ENCODE measurements at regions of chr6 and their contacts with region 1.

Region 1: DNA sequence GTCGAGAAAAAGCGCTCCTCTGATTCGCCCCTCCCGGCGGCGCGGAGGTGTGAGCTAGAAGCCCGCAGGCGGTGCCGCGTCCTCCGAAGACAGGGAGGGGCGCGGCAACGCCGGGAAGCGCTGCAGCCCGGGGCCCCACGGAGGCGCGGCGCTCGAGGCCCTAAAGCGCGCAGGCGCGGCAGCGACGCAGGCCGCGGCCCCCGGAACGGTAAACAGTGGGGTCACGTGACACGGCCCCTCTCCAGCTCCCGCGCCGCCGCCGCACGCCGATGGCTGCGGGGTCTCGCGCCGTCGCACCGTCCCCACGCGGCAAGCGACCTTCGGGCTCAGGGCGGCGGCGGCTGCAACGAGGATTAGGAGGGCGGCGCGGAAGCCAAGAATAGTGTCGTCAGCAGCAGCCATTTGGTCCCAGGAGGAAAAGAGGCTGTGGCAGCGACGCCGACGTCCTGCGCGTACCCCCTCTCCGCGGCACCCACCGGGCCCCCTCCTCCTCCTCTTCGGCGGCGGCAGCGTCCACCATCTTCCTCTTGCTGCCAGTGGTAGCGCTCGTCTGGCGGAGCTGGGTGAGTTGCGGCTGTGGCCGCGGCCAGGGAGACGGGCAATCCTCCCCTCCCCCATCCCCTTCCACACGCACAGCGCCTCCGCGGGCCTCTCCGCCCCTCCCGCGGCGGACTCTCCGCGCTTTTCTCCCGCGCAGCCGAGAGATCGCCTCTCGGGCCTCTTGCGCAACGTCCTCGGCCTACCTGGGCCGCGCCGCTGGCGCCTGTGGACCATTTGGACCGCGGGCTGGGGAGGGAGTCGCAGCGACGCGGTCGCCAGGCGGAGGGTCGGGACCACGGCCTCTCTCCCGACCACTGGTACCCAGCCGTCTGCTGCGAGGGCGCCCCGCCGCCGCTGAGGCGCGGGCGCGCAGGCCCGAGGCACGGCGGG is at the start of gene PHF3:
- DNase-seq: peak; percentile 81 to 98 (median 90)
- ATAC-seq: peak; percentile 91
- H3K4me3 ChIP-seq: peak within 1 kb of the TSS; percentile 85 to 97
- H3K4me3 Mint-ChIP-seq: peak within 1 kb of the TSS; percentile 98
- H3K27ac ChIP-seq: peak within 1 kb of the TSS; percentile 94 to 96
- H3K27ac Mint-ChIP-seq: peak within 1 kb of the TSS; percentile 98
- H3K4me1 ChIP-seq: peaks cover 35% of the 10 kb centered on the region
- H3K4me1 Mint-ChIP-seq: peaks cover 53% of the 10 kb centered on the region
- H3K27me3 ChIP-seq: no peaks in the 10 kb centered on the region
- H3K27me3 Mint-ChIP-seq: no peaks in the 10 kb centered on the region
- CTCF ChIP-seq: no peak
- total RNA-seq, gene PHF3: 123 to 126 TPM

Region 2: DNA sequence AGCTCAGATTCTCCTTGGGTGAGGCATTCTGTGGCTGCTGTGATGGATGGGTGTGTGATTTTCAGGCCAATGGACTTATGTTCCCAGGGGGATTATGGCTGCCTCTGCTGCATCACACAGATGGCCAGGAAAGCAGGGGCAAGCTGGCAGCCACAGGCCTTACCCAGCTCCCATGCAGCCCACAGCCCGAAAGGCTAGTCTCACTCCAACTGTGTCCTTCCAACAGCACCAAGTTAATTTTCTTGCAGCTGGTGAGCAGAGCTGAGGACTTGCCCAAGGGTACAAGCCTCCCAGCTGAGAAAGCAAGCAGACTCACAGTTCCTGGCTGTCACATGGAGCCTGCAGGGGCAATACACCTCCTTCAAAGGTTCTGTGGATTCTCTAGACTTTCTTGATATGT is 1194.7 kb before region 1 on chr6:
- CTCF ChIA-PET with region 1: no interaction called
- POLR2A ChIA-PET with region 1: no interaction called
- intact Hi-C with region 1: no loop called
- DNase-seq: no peak
- ATAC-seq: no peak
- H3K4me3 ChIP-seq: no peak overlapping the region
- H3K4me3 Mint-ChIP-seq: no peak overlapping the region
- H3K27ac ChIP-seq: no peak overlapping the region
- H3K27ac Mint-ChIP-seq: no peak overlapping the region
- H3K4me1 ChIP-seq: no peaks in the 10 kb centered on the region
- H3K4me1 Mint-ChIP-seq: no peaks in the 10 kb centered on the region
- H3K27me3 ChIP-seq: no peaks in the 10 kb centered on the region
- H3K27me3 Mint-ChIP-seq: no peaks in the 10 kb centered on the region
- CTCF ChIP-seq: no peak

Region 3: DNA sequence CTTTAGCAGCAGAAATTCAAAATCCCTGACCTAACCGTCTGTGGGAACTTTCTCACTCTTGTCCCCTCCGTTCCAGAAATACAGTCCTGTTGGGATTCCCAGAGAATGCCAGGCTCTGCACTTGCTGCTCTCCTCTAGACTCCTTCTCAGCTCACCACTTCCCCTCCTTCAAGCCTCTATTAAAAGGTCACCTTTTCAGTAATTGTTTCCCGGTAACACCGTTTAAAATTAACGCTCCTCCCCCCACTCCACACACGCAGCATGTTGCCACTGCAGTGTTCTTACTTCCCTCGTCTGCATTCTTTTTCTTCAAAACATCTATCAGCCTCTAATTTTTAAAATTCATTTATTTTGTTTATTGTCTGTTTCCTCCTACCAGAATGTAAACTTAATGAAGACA is 267.5 kb before region 1 on chr6:
- CTCF ChIA-PET with region 1: no interaction called
- POLR2A ChIA-PET with region 1: no interaction called
- intact Hi-C with region 1: no loop called
- DNase-seq: no peak
- ATAC-seq: no peak
- H3K4me3 ChIP-seq: no peak overlapping the region
- H3K4me3 Mint-ChIP-seq: no peak overlapping the region
- H3K27ac ChIP-seq: no peak overlapping the region
- H3K27ac Mint-ChIP-seq: no peak overlapping the region
- H3K4me1 ChIP-seq: no peaks in the 10 kb centered on the region
- H3K4me1 Mint-ChIP-seq: no peaks in the 10 kb centered on the region
- H3K27me3 ChIP-seq: no peaks in the 10 kb centered on the region
- H3K27me3 Mint-ChIP-seq: no peaks in the 10 kb centered on the region
- CTCF ChIP-seq: no peak

Region 4: DNA sequence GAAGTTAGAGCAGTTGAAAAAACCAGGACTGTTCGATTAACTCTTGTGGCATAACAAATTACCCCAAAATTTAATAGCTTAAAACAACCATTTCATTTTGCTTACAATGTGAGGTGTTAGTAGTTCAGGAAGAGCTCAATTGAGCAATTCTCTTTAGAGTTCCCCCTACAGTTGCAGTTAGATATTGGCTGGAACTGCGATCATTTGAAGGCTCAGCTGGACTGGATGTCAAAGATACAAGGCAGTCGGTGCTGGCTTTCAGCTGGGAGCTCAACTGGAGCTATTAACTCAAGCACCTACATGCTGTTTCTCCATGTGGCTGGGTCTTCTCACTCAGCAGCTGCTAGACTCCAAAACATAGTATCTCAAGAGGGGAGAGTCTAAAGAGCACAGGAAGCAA is 159.6 kb before region 1 on chr6:
- CTCF ChIA-PET with region 1: no interaction called
- POLR2A ChIA-PET with region 1: no interaction called
- intact Hi-C with region 1: no loop called
- DNase-seq: no peak
- ATAC-seq: no peak
- H3K4me3 ChIP-seq: no peak overlapping the region
- H3K4me3 Mint-ChIP-seq: no peak overlapping the region
- H3K27ac ChIP-seq: no peak overlapping the region
- H3K27ac Mint-ChIP-seq: no peak overlapping the region
- H3K4me1 ChIP-seq: no peaks in the 10 kb centered on the region
- H3K4me1 Mint-ChIP-seq: no peaks in the 10 kb centered on the region
- H3K27me3 ChIP-seq: no peaks in the 10 kb centered on the region
- H3K27me3 Mint-ChIP-seq: peaks cover 2% of the 10 kb centered on the region
- CTCF ChIP-seq: no peak

Region 5: DNA sequence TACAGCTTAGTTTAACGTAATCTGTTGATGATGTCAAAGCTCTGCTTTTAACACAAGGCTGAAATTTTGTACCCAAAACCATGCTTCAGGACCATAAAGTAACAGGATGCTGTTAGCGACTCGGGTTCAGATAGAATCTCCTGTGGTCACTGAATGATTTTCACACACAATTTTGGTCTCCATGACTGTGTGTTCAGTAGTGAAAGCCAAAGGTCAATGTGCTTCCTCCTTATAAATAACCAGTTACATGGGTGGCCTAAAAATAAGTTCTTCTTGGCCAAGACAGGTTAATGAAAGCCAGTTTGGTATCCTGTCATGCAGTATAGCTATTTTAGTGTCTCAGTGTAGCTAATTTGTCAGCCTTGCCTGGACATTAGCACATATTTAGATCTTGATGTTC is 82.6 kb before region 1 on chr6:
- CTCF ChIA-PET with region 1: no interaction called
- POLR2A ChIA-PET with region 1: no interaction called
- intact Hi-C with region 1: no loop called
- DNase-seq: no peak
- ATAC-seq: no peak
- H3K4me3 ChIP-seq: no peak overlapping the region
- H3K4me3 Mint-ChIP-seq: no peak overlapping the region
- H3K27ac ChIP-seq: no peak overlapping the region
- H3K27ac Mint-ChIP-seq: no peak overlapping the region
- H3K4me1 ChIP-seq: no peaks in the 10 kb centered on the region
- H3K4me1 Mint-ChIP-seq: no peaks in the 10 kb centered on the region
- H3K27me3 ChIP-seq: peaks cover 0 to 8% of the 10 kb centered on the region in 2 experiments
- H3K27me3 Mint-ChIP-seq: peaks cover 21% of the 10 kb centered on the region
- CTCF ChIP-seq: no peak

Region 6: DNA sequence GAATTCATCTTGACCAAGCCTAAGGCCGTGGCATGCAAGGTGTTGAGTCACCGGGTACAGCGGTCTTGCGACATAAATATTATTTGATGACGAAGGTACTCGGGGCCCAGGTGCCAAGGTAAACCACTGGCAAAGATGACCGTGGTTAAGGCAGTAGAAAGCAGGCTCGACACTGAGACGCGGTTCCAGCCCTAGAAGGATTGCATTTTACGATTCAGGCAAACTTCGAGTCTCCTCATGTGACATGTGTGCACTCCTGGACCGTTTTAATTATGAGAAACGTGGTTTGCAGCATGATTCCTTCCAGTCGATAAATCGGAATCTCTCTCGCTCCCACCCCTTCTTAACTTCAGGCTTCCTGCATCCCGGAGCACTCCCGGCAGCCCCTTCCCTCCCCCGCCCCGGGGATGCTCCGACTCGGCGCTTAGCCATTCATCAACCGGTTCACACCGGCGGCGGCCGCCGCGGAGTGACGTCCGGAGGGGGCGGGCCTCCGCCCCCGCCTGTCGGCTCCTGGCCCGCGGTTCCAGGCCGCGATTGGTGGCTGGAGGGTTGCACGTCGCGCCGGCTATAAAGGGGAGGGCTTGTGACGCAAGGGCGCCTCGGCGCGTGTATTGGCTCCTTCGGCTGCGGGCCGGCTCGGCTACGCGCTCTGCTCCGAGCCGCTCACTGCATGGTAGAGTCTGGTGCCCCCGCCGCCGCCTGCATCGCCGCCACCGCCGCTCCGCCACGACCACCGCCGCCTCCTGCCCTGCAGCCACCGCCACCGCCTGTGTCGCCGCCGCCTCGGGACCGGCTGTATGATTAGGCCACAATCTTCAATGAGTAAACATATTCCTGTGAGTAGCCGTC is 63.7 kb before region 1 on chr6 and contains the starts of genes LOC128125822 and PTP4A1:
- CTCF ChIA-PET with region 1: interaction called, 4 read pairs
- POLR2A ChIA-PET with region 1: interaction called, 37 read pairs
- intact Hi-C with region 1: loop called (anchors 1 kb)
- DNase-seq: peak; percentile 94 to 99 (median 96)
- ATAC-seq: peak; percentile 83
- H3K4me3 ChIP-seq: peak within 1 kb of the TSS; percentile 66 to 85
- H3K4me3 Mint-ChIP-seq: peak within 1 kb of the TSS; percentile 93
- H3K27ac ChIP-seq: peak within 1 kb of the TSS; percentile 97 to 98
- H3K27ac Mint-ChIP-seq: peak within 1 kb of the TSS; percentile 98
- H3K4me1 ChIP-seq: peaks cover 27% of the 10 kb centered on the region
- H3K4me1 Mint-ChIP-seq: peaks cover 41% of the 10 kb centered on the region
- H3K27me3 ChIP-seq: no peaks in the 10 kb centered on the region
- H3K27me3 Mint-ChIP-seq: no peaks in the 10 kb centered on the region
- CTCF ChIP-seq: no peak
- total RNA-seq, gene PTP4A1: 329 to 360 TPM

Region 7: DNA sequence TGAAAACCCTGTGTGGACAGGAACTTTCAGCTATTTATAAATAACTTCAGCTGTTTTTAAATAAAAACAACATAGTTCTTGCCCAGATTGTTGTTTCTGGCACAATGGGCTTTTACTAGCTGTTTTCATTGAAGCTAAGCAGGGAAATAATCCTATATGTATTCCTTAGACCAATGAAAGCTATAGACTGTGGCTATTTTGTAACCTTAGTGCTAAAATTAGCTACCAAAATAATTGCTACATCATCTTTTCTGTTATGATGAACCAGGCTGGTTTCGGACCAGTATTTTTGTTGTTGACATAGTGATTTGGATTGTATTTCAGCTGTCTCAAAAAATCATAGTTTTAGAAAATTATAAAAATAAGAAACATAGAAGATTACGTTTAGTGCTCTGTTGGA is 13.4 kb after region 1 on chr6:
- CTCF ChIA-PET with region 1: interaction called, 5 read pairs
- POLR2A ChIA-PET with region 1: interaction called, 8 read pairs
- intact Hi-C with region 1: loop called in 1 of 2 experiments (anchors 2 kb)
- DNase-seq: no peak
- ATAC-seq: no peak
- H3K4me3 ChIP-seq: no peak overlapping the region
- H3K4me3 Mint-ChIP-seq: no peak overlapping the region
- H3K27ac ChIP-seq: no peak overlapping the region
- H3K27ac Mint-ChIP-seq: no peak overlapping the region
- H3K4me1 ChIP-seq: peaks cover 71% of the 10 kb centered on the region
- H3K4me1 Mint-ChIP-seq: peaks cover 75% of the 10 kb centered on the region
- H3K27me3 ChIP-seq: no peaks in the 10 kb centered on the region
- H3K27me3 Mint-ChIP-seq: no peaks in the 10 kb centered on the region
- CTCF ChIP-seq: no peak

Region 8: DNA sequence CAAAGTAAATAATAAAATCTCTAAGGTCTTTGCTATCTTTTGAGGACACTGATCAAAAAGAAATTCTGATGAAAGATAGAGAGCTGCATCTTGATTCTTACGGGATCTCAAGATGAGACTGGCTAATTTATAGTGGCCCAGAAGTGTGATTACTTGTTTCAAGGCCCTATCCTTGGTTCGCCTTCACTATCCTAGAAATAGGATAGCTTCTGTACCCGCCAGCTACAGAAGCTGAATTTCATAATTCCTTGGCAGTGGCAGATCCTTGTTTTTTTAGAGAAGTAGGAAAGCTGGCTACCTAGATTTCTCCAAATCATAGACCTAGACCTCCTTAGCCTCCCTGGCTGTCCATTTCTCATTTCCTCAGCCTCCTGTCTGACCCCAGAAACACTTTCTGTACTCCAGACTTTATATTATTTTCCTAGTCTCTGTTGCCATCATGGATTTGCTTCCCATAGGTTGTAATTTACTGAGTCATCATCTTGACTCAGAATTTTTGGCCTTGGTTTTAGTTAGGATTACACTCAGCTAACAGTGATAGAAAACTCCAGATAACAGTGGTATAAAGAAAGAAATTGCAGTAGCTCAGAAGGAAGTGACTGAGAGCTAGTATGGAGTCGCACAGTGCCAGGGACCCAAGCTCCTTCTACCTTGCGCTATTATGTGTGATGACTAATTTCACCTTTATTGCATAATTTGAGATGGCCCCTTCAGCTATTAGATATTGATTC is 27.5 kb after region 1 on chr6:
- CTCF ChIA-PET with region 1: no interaction called
- POLR2A ChIA-PET with region 1: interaction called, 10 read pairs
- intact Hi-C with region 1: no loop called
- DNase-seq: no peak
- ATAC-seq: no peak
- H3K4me3 ChIP-seq: no peak overlapping the region
- H3K4me3 Mint-ChIP-seq: peak overlapping the region; percentile 12
- H3K27ac ChIP-seq: no peak overlapping the region
- H3K27ac Mint-ChIP-seq: peak overlapping the region; percentile 61
- H3K4me1 ChIP-seq: peaks cover 36% of the 10 kb centered on the region
- H3K4me1 Mint-ChIP-seq: peaks cover 81% of the 10 kb centered on the region
- H3K27me3 ChIP-seq: no peaks in the 10 kb centered on the region
- H3K27me3 Mint-ChIP-seq: no peaks in the 10 kb centered on the region
- CTCF ChIP-seq: no peak

Region 9: DNA sequence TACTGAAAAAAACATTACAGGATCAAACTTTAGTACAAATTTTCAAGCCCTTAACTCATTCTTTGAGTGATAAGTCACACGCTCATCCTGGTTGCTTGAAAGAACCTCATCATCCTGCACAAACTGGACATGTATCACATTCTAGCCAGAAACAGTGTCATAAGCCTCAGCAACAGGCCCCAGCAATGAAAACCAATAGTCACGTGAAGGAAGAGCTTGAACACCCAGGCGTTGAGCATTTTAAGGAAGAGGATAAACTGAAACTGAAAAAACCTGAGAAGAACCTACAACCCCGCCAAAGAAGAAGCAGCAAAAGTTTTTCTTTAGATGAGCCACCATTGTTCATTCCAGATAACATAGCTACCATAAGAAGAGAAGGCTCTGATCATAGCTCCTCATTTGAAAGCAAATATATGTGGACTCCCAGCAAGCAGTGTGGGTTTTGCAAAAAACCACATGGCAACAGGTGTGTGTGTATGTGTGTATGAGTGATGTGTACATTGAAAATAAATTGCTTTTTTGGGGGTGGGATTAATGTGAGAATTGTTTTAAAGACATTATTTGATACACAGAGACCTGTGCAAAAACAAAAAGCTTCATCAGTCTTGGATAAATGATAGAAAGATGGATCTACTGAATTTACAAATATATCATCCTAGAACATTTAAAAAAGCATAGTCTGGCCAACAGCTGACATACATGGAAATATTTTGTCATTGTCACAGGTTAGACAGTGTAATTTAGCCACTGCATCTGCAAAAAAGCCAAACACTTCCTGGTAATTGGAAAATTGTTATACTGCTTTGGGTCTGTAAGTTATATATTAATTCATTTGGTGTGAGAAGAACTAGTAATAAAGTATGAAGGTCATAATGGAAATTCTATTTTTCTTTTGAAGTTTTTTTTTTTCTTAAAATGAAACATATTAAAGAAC is 49.9 kb after region 1 on chr6:
- CTCF ChIA-PET with region 1: interaction called, 3 read pairs
- POLR2A ChIA-PET with region 1: no interaction called
- intact Hi-C with region 1: loop called in 1 of 2 experiments (anchors 10 kb)
- DNase-seq: peak in 1 of 9 experiments; percentile 8
- ATAC-seq: no peak
- H3K4me3 ChIP-seq: no peak overlapping the region
- H3K4me3 Mint-ChIP-seq: no peak overlapping the region
- H3K27ac ChIP-seq: no peak overlapping the region
- H3K27ac Mint-ChIP-seq: no peak overlapping the region
- H3K4me1 ChIP-seq: peaks cover 5% of the 10 kb centered on the region
- H3K4me1 Mint-ChIP-seq: peaks cover 48% of the 10 kb centered on the region
- H3K27me3 ChIP-seq: no peaks in the 10 kb centered on the region
- H3K27me3 Mint-ChIP-seq: no peaks in the 10 kb centered on the region
- CTCF ChIP-seq: no peak

Region 10: GRCh38 chr6:63716169-63716568 is 80.3 kb after region 1 on chr6:
- CTCF ChIA-PET with region 1: no interaction called
- POLR2A ChIA-PET with region 1: no interaction called
- intact Hi-C with region 1: loop called in 1 of 2 experiments (anchors 5 kb)
- DNase-seq: no peak
- ATAC-seq: no peak
- H3K4me3 ChIP-seq: no peak overlapping the region
- H3K4me3 Mint-ChIP-seq: no peak overlapping the region
- H3K27ac ChIP-seq: no peak overlapping the region
- H3K27ac Mint-ChIP-seq: no peak overlapping the region
- H3K4me1 ChIP-seq: no peaks in the 10 kb centered on the region
- H3K4me1 Mint-ChIP-seq: peaks cover 4% of the 10 kb centered on the region
- H3K27me3 ChIP-seq: no peaks in the 10 kb centered on the region
- H3K27me3 Mint-ChIP-seq: no peaks in the 10 kb centered on the region
- CTCF ChIP-seq: no peak

Measured in CD8-positive, alpha-beta T cell (primary cell).